AG04450 (cell line): ENCODE measurements at regions of chr2 and their contacts with region 1.

Region 1: GRCh38 chr2:30275256-30275655 is 43.9 kb downstream of the LBH start:
- DNase-seq: no peak
- H3K4me3 ChIP-seq: no peak overlapping the region
- H3K27ac ChIP-seq: no peak overlapping the region
- H3K27me3 ChIP-seq: no peaks in the 10 kb centered on the region
- CTCF ChIP-seq: no peak

Region 2: GRCh38 chr2:30293303-30293921 is 18.2 kb after region 1 on chr2:
- CTCF ChIA-PET with region 1: no interaction called
- POLR2A ChIA-PET with region 1: interaction called, 14 read pairs
- DNase-seq: peak; percentile 98
- H3K4me3 ChIP-seq: no peak overlapping the region
- H3K27ac ChIP-seq: peak overlapping the region; percentile 96
- H3K27me3 ChIP-seq: no peaks in the 10 kb centered on the region
- CTCF ChIP-seq: no peak